ENCODE measurements at regions of chr7 and their contacts with region 1.

Region 1: DNA sequence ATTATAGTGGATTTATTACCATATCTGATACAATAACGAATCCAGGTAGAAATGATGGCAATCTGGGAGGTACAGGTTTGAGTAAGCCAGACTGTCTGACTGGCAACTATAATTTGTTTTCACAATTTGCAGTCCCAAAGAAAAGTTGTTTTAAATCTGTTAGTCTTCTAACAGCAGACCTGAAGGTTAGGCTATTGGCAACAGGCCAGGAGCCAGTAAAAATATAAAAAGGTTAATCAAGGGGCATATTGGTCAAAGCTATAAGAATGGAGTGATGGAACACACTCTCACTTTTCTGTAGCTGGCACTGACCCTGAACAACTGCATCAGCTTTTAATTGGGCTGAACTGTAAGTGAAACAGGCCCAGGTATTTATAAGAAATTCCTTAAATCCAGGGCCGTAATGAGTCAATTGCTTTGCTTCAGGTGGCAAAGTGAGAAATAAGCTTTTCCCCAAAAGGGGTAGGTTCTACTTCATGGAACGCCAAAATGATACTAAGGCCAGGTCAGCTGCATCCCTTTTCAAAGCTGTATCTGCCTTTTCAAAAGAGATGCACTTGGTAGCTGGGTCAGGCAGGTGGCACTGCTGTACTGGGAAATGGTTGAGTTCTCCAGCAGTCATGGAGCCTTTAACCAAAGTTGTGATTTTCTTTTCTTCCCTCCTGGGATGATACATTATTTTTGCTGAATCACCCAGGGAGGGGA is 7.0 kb upstream of the GPR22 start:
- DNase-seq: peak; percentile 54
- H3K4me3 ChIP-seq: no peak overlapping the region
- H3K27ac ChIP-seq: no peak overlapping the region
- H3K4me1 ChIP-seq: no peaks in the 10 kb centered on the region
- H3K27me3 ChIP-seq: no peaks in the 10 kb centered on the region
- CTCF ChIP-seq: peak; percentile 63 to 73 (median 69)
- EP300 ChIP-seq: no peak
- POLR2A ChIP-seq: no peak

Region 2: GRCh38 chr7:107725151-107725740 is 262.4 kb after region 1 on chr7:
- in situ Hi-C with region 1: loop called (anchors 10 kb)
- intact Hi-C with region 1: loop called (anchors 5 kb)
- DNase-seq: peak; percentile 39
- H3K4me3 ChIP-seq: no peak overlapping the region
- H3K27ac ChIP-seq: no peak overlapping the region
- H3K4me1 ChIP-seq: no peaks in the 10 kb centered on the region
- H3K27me3 ChIP-seq: peaks cover 12% of the 10 kb centered on the region
- CTCF ChIP-seq: peak; percentile 67 to 78 (median 71)
- EP300 ChIP-seq: no peak
- POLR2A ChIP-seq: no peak

Region 3: DNA sequence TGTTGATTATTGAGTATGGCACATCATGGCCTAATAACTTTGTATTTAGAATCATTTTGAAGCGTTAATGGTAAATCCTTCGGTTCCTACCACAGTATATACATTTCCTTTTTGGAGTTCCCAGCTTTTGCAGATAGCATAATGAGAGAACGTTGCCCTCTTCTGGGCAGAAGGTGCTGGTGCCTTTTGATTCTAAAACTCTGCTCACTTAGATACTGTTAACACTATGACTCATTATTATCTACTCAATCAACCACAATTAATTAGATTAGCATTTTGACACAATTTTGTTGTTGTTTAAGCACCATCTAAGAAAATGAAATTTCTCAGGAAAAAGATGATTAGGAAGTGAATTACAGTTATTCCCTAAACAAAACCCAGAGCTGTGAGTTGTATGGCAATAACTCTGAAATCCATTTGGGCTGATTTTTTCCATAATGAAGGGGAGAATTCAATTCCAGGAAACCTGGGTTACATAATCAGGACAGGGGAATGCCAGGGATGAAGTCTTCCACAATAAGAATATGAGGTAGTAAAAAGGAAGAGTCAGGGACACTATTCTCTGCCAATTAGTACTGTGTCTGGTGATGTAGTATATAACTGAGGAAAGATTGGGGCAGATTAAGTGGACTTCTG is 416.6 kb after region 1 on chr7:
- in situ Hi-C with region 1: loop called in 2 of 4 experiments (anchors 10 to 25 kb)
- intact Hi-C with region 1: loop called (anchors 2 kb)
- DNase-seq: peak; percentile 46
- H3K4me3 ChIP-seq: no peak overlapping the region
- H3K27ac ChIP-seq: no peak overlapping the region
- H3K4me1 ChIP-seq: peaks cover 0 to 12% (median 2%) of the 10 kb centered on the region in 4 donors
- H3K27me3 ChIP-seq: no peaks in the 10 kb centered on the region
- CTCF ChIP-seq: peak; percentile 71 to 83 (median 74)
- EP300 ChIP-seq: no peak
- POLR2A ChIP-seq: no peak

Region 4: DNA sequence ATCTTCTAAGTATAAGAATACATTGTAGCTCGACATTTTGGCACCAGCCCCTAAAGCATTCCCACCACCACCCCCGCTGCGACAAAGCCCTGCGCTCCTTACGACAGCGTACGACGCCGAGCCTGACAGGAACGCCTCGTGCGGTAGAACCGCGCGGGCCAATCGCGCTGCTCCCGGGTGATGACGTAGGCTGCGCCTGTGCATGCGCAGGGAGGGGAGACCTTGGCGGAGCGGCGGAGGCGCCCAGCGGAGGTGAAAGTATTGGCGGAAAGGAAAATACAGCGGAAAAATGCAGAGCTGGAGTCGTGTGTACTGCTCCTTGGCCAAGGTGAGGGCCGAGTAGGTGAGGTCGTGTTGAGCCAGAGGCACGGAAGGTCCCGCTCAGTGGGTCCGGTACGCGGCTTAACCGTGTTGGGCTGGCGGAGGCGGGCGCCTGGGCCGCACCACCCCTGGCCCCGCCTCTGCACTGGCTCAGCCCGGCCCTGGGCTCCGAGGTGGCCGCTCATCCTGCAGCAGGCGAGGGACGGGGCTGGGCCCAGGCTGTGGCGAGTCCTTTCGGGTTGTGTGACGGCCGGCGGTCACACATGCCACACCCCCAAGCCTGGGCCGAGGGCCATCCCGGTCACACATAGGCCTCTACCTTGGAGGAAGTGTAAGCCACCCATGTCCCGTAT is 428.2 kb after region 1 on chr7 and contains the start of gene DLD:
- in situ Hi-C with region 1: loop called in 1 of 4 experiments (anchors 25 kb)
- intact Hi-C with region 1: no loop called
- DNase-seq: peak; percentile 96
- H3K4me3 ChIP-seq: peak within 1 kb of the TSS; percentile 55 to 75 (median 66)
- H3K27ac ChIP-seq: peak within 1 kb of the TSS; percentile 94 to 96 (median 94)
- H3K4me1 ChIP-seq: peaks cover 14 to 30% (median 28%) of the 10 kb centered on the region in 4 donors
- H3K27me3 ChIP-seq: no peaks in the 10 kb centered on the region
- CTCF ChIP-seq: peak in 1 of 5 experiments; percentile 15
- EP300 ChIP-seq: no peak
- POLR2A ChIP-seq: peak; percentile 94
- total RNA-seq, gene DLD: 46.0 to 131 (median 126) TPM

Region 5: GRCh38 chr7:108515013-108515412 is 1052.1 kb after region 1 on chr7:
- in situ Hi-C with region 1: no loop called
- intact Hi-C with region 1: loop called (anchors 5 kb)
- DNase-seq: no peak
- H3K4me3 ChIP-seq: no peak overlapping the region
- H3K27ac ChIP-seq: no peak overlapping the region
- H3K4me1 ChIP-seq: peaks cover 0 to 11% (median 0%) of the 10 kb centered on the region in 4 donors
- H3K27me3 ChIP-seq: no peaks in the 10 kb centered on the region
- CTCF ChIP-seq: no peak
- EP300 ChIP-seq: no peak
- POLR2A ChIP-seq: no peak

Measured in transverse colon (tissue), 4 donors.